Transverse colon (tissue), 4 donors: ENCODE measurements at regions of chr15 and their contacts with region 1.

Region 1: DNA sequence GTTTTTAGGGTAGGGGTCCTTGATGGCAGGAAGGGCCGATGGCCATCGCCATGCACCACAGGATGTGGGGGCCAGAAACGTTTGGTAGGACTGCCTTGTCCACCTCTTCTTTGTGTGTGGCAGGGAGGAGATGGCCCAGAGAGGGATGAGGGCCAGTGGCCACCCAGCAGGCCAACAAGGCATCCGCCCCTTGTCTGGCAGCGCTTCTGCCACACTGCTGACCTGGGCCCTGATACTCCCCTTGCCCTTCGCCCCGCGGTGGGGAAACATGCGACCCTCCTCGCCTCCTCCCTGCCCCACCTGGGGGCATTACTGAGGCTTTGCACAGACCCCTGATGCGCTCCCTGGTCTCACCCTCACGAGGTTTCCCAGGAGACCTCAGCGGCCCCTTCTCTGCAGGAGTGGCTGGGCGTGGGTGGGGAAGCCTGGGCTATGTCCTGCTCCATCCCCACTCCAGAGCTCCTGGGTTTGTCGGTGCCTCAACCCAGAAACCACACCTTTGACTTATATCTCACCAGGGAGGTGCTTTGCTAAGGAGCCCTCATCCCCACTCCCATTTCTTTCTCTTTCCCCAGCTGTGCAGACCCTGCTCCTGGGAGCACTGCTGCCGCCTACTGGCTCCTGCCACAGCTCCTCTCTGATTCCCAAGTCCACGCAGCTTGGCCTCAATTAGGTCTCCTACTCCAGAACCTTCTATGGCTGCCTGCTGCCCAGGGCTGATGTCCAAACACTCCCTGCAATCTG is 38.7 kb downstream of the FEM1B start:
- DNase-seq: no peak
- H3K4me3 ChIP-seq: no peak overlapping the region
- H3K27ac ChIP-seq: no peak overlapping the region
- H3K4me1 ChIP-seq: no peaks in the 10 kb centered on the region
- H3K27me3 ChIP-seq: no peaks in the 10 kb centered on the region
- CTCF ChIP-seq: peak in 2 of 5 experiments; percentile 18 to 19
- EP300 ChIP-seq: no peak
- POLR2A ChIP-seq: no peak

Region 2: DNA sequence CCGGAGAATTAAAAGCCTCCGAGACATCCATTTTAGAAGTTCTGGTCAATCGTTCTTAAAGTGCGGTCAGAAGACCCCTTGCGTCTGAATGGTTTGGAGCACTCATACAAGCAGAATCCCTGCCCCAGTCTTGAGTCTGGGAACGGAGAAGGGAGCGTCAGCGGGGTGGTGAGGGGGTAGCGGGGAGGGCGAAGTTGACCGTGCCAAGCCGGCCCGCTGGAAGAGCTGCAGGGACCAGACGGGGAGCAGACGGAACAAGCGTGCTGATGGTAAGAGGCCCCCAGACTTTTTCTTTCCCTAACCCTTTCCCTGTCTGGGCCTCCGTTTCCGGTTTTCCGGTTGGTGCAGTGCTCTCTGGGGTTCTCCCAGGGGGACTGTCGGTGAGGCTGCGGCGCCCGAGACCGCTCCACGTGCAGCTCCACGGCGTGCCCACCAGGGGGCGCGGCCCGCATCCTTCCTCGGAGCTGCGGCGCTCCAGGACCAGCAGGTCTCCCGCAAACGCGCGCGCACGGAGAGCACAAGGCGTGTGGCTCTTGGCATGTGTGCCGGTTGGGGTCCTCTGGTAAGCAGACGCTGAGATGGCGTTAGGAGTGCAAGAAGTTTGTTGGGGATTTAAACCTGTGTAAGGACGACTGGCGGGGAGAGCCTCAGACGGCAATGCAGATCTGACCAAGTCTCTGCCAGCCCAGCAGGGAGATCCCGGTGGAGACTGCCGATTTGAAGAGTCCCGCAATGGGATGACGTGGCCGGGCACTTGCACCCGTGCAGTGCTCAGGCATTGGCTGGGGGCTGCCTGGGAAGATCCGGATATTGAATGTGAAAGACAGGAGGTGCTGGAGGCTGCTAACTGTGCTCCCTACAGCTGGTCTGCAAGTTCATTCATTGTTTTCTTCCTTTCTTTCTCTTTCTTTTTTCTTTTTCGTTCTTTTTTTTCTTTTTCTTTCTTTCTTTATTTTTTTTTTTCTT is 243.4 kb after region 1 on chr15:
- in situ Hi-C with region 1: no loop called
- intact Hi-C with region 1: loop called (anchors 10 kb)
- DNase-seq: peak; percentile 66
- H3K4me3 ChIP-seq: peak overlapping the region in 3 of 4 donors; percentile 17 to 37 (median 22)
- H3K27ac ChIP-seq: no peak overlapping the region
- H3K4me1 ChIP-seq: peaks cover 0 to 15% (median 13%) of the 10 kb centered on the region in 4 donors
- H3K27me3 ChIP-seq: peaks cover 40% of the 10 kb centered on the region
- CTCF ChIP-seq: peak; percentile 90 to 97 (median 96)
- EP300 ChIP-seq: no peak
- POLR2A ChIP-seq: no peak

Region 3: GRCh38 chr15:68650901-68651709 is 334.9 kb after region 1 on chr15:
- in situ Hi-C with region 1: loop called in 1 of 4 experiments (anchors 25 kb)
- intact Hi-C with region 1: no loop called
- DNase-seq: peak; percentile 72
- H3K4me3 ChIP-seq: no peak overlapping the region
- H3K27ac ChIP-seq: no peak overlapping the region
- H3K4me1 ChIP-seq: no peaks in the 10 kb centered on the region
- H3K27me3 ChIP-seq: no peaks in the 10 kb centered on the region
- CTCF ChIP-seq: peak; percentile 55 to 79 (median 69)
- EP300 ChIP-seq: no peak
- POLR2A ChIP-seq: no peak